Mammary epithelial cell (primary cell): ENCODE measurements at regions of chr2 and their contacts with region 1.

Region 1: DNA sequence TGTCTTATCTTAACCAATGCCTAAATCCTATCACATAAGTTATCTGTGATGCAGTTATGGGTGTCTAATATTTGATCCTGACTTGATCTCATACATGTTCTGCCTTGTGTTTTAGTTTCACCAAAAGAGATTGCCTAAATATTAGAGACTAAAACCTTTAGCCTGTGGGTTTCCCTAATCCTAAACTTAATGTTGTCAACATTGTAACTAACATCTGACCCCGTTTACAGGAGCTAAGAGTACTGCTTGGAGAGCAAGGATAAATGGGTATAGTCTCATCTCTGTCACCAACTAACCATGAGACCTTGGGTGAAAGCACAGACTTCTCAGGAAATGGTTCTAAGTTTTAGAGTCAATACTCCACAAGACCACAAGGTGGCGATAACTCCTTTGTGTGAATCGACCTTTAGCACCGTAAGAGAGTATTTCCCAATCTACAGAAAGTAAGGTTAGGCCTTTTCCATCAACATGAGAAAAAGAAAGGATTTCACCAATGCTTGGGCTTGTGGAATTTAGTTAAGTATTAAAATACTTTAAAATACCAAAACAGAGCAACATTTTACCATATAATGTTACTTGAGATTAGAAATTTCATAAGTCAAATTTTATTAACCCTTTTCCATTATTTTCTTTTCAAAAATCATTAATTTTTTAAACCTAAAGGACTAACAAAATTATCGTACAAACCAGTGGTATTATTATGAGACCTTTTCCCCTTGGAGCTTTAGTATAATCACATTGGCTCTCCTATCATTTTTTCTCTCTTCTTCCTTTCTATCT is 60.5 kb downstream of the G6PC2 start:
- DNase-seq: peak; percentile 72
- H3K4me3 ChIP-seq: no peak overlapping the region
- H3K27ac ChIP-seq: no peak overlapping the region
- H3K4me1 ChIP-seq: peaks cover 8% of the 10 kb centered on the region
- H3K27me3 ChIP-seq: peaks cover 1% of the 10 kb centered on the region
- CTCF ChIP-seq: peak; percentile 77 to 83

Region 2: DNA sequence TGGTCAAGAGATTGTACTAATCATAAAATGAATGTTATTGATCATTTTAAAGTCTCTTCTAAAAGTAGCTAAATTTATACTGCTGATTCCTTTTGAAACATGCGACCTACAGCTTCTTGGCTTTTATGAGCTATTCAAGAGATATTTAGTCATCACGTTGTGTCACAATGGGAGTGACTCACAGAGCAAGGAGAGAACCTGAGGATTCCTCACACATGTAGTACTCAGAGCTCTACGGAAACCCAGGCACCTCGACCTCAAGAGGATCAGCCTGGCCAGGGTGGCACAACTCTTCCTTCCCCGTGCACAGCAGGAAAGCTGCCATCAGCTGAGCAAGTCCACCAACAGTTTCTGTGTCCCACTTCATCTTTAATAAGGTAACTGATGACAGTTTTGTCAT is 107.7 kb after region 1 on chr2 and contains the start of gene DHRS9:
- CTCF ChIA-PET with region 1: no interaction called
- dilution Hi-C with region 1: no loop called
- in situ Hi-C with region 1: no loop called
- intact Hi-C with region 1: loop called (anchors 1 kb)
- DNase-seq: peak; percentile 94
- H3K4me3 ChIP-seq: no peak within 1 kb of the TSS
- H3K27ac ChIP-seq: peak within 1 kb of the TSS; percentile 34
- H3K4me1 ChIP-seq: peaks cover 35% of the 10 kb centered on the region
- H3K27me3 ChIP-seq: no peaks in the 10 kb centered on the region
- CTCF ChIP-seq: no peak
- total RNA-seq, gene DHRS9: not detected

Region 3: DNA sequence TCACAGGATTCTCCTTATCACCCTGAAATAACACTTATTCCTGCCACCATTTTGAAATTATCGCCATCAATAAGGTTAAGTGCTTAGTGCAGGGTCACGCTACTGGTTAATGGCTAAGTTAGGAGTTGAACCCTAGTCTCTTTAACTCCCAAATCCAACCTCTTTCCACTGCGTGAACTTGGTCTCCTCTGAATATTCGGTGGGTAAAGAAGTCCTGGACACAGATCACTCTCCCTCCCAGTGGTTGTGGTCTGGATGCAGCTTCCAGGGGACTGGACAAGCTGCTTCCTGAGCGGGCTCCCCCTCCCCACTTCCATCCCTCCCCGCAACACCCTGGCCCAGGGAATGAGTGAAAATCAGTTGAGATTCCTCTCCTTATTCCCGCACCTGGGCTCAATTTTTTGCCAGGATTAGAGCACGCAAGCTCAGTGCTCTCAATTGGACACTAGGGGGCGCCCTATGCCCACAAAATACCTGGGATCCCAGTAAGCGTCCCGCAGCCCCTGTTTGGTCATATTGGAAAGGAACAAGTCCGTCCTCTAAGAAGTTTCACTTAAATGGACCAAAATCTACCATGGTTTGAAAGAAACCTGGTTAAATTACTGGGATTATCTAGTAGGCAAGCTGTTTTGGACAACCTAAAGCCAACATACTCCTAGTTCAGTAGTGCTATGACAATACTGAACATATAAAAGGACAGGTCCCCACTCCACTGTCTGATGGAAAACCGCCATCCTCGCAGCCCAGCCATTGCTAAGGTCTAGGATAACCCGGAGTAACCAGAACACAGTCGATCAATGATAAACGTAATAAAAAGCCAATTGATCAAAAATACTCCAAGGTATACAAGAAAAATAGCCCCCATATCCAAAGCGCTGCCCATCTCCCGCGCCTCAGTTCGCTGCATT is 148.1 kb after region 1 on chr2:
- CTCF ChIA-PET with region 1: no interaction called
- dilution Hi-C with region 1: no loop called
- in situ Hi-C with region 1: no loop called
- intact Hi-C with region 1: loop called (anchors 1 kb)
- DNase-seq: peak; percentile 55
- H3K4me3 ChIP-seq: no peak overlapping the region
- H3K27ac ChIP-seq: no peak overlapping the region
- H3K4me1 ChIP-seq: no peaks in the 10 kb centered on the region
- H3K27me3 ChIP-seq: no peaks in the 10 kb centered on the region
- CTCF ChIP-seq: peak; percentile 81 to 89

Region 4: GRCh38 chr2:169141713-169142352 is 180.2 kb after region 1 on chr2:
- CTCF ChIA-PET with region 1: no interaction called
- dilution Hi-C with region 1: no loop called
- in situ Hi-C with region 1: loop called (anchors 10 kb)
- intact Hi-C with region 1: loop called (anchors 2 kb)
- DNase-seq: peak; percentile 44
- H3K4me3 ChIP-seq: no peak overlapping the region
- H3K27ac ChIP-seq: no peak overlapping the region
- H3K4me1 ChIP-seq: no peaks in the 10 kb centered on the region
- H3K27me3 ChIP-seq: no peaks in the 10 kb centered on the region
- CTCF ChIP-seq: peak; percentile 89 to 91

Region 5: GRCh38 chr2:169275696-169276444 is 314.2 kb after region 1 on chr2:
- CTCF ChIA-PET with region 1: no interaction called
- dilution Hi-C with region 1: no loop called
- in situ Hi-C with region 1: no loop called
- intact Hi-C with region 1: loop called (anchors 5 kb)
- DNase-seq: peak; percentile 7
- H3K4me3 ChIP-seq: no peak overlapping the region
- H3K27ac ChIP-seq: no peak overlapping the region
- H3K4me1 ChIP-seq: no peaks in the 10 kb centered on the region
- H3K27me3 ChIP-seq: no peaks in the 10 kb centered on the region
- CTCF ChIP-seq: peak in 1 of 2 donors; percentile 47